ENCODE measurements at regions of chr15 and their contacts with region 1.

Region 1: DNA sequence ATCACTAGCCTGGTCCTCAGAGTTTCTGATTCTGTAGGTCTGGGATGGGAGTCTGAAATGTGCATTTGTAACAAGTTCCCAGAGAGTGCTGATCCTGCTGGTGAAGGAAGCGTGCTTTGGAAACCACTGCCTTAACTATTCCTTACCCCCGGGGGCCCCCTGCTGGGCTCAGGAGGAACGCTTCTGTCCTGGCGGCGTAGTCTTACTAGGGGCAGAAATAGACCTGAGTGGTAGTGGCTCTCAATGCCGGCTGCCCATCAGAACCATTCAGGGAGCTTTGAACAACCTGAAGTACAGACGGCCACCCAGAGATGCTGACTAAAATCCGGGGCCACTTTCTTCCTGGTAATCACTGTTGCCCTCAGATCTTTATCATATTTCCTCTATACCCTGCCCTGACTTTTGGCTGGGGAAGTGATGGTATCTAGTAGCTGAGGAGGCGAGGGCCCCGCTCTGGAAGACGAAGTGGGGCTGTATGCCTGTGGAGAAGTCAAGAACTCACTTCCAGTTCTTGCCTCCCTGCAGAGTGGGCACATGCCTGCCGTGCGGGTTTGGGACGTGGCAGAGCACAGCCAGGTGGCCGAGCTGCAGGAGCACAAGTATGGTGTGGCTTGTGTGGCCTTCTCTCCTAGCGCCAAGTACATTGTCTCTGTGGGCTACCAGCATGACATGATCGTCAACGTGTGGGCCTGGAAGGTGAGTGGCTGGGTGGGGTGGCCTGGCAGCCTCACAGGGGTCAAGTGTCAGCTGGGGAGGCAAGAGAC is 16.3 kb upstream of the JMJD7 start:
- DNase-seq: peak; percentile 83
- H3K4me3 Mint-ChIP-seq: no peak overlapping the region
- H3K27ac Mint-ChIP-seq: peak overlapping the region; percentile 62
- H3K4me1 Mint-ChIP-seq: peaks cover 29% of the 10 kb centered on the region
- H3K27me3 Mint-ChIP-seq: no peaks in the 10 kb centered on the region

Region 2: DNA sequence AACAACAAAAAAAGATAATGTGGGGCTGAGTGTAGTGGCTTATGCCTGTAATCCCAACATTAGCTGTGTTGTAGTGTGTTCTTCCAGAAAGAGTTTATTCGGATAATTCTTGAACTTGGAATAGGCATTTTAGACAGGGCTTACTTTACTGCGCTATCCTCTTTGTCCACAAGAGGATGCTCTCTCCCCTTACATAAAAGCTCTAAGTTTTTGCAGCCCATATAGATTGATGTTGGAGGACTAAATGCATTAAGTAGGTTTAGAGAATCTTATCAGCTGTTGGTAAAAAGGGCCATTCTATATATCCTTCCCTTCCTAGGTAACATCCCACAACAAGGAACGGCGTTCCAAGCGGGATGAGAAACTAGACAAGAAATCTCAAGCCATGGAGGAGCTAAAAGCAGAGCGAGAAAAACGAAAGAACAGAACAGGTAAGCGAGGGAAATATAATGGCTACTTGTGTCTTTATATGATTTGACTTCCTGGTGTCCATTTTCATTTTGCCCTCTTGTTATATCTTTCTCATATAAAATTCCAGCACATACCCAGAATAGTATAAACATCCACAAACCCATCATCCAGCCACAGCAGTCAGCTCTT is 345.7 kb before region 1 on chr15:
- CTCF ChIA-PET with region 1: interaction called, 17 read pairs
- DNase-seq: peak; percentile 49
- H3K4me3 Mint-ChIP-seq: no peak overlapping the region
- H3K27ac Mint-ChIP-seq: no peak overlapping the region
- H3K4me1 Mint-ChIP-seq: no peaks in the 10 kb centered on the region
- H3K27me3 Mint-ChIP-seq: no peaks in the 10 kb centered on the region

Region 3: GRCh38 chr15:41603941-41604911 is 207.4 kb before region 1 on chr15:
- CTCF ChIA-PET with region 1: interaction called, 27 read pairs
- DNase-seq: peak; percentile 69
- H3K4me3 Mint-ChIP-seq: no peak overlapping the region
- H3K27ac Mint-ChIP-seq: no peak overlapping the region
- H3K4me1 Mint-ChIP-seq: peaks cover 8% of the 10 kb centered on the region
- H3K27me3 Mint-ChIP-seq: peaks cover 66% of the 10 kb centered on the region

Region 4: GRCh38 chr15:41695750-41696426 is 115.7 kb before region 1 on chr15:
- CTCF ChIA-PET with region 1: interaction called, 18 read pairs
- DNase-seq: peak; percentile 70
- H3K4me3 Mint-ChIP-seq: no peak overlapping the region
- H3K27ac Mint-ChIP-seq: peak overlapping the region; percentile 68
- H3K4me1 Mint-ChIP-seq: peaks cover 28% of the 10 kb centered on the region
- H3K27me3 Mint-ChIP-seq: no peaks in the 10 kb centered on the region

Region 5: GRCh38 chr15:41790756-41791546 is 20.7 kb before region 1 on chr15:
- CTCF ChIA-PET with region 1: interaction called, 15 read pairs
- DNase-seq: no peak
- H3K4me3 Mint-ChIP-seq: peak overlapping the region; percentile 54
- H3K27ac Mint-ChIP-seq: peak overlapping the region; percentile 84
- H3K4me1 Mint-ChIP-seq: peaks cover 53% of the 10 kb centered on the region
- H3K27me3 Mint-ChIP-seq: no peaks in the 10 kb centered on the region

Region 6: GRCh38 chr15:41904541-41905005 is 93.0 kb after region 1 on chr15:
- CTCF ChIA-PET with region 1: interaction called, 42 read pairs
- DNase-seq: peak; percentile 80
- H3K4me3 Mint-ChIP-seq: no peak overlapping the region
- H3K27ac Mint-ChIP-seq: peak overlapping the region; percentile 42
- H3K4me1 Mint-ChIP-seq: peaks cover 17% of the 10 kb centered on the region
- H3K27me3 Mint-ChIP-seq: no peaks in the 10 kb centered on the region

Region 7: GRCh38 chr15:41972253-41973242 is 160.9 kb after region 1 on chr15 and contains the start of gene EHD4:
- CTCF ChIA-PET with region 1: no interaction called
- DNase-seq: peak; percentile 97
- H3K4me3 Mint-ChIP-seq: peak within 1 kb of the TSS; percentile 87
- H3K27ac Mint-ChIP-seq: peak within 1 kb of the TSS; percentile 95
- H3K4me1 Mint-ChIP-seq: peaks cover 55% of the 10 kb centered on the region
- H3K27me3 Mint-ChIP-seq: peaks cover 15% of the 10 kb centered on the region